Activated CD4-positive, alpha-beta memory T cell treated with anti-CD3 and anti-CD28 coated beads, Interleukin-2, amount 10 ng/mL, durations not matched to agents 7 days and 5 days (primary cell): ENCODE measurements at regions of chr10 and their contacts with region 1.

Region 1: DNA sequence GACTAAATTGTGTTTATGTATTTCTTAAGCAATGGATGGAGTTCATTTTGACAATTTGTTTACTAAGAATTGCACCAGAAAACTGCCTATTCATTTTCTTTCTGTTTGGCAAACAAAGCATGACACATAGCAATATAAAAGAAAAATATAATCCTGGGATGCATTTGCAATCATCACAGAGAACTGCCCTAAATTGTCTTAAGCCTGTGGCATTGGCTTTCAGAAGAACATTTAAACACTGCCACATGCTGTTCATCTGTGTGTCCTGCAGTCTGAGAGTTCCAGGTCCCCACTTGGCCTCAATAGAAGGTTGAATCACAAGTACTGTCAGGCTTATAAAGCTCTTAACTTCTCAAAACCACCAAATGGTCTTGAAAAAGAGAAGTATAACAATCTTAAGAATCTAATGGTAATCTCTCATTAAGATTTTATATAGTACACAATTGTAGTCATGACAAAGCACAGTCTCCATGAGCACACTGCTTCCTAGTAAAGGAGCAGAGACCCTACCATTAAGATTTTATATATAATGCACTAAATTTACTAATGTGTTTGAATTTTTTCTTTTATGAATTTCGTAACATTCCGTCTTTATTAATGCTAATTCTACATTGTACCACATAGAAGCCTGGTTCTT is 29.9 kb downstream of the RNLS start:
- DNase-seq: peak; percentile 52
- H3K4me3 Mint-ChIP-seq: no peak overlapping the region
- H3K27ac Mint-ChIP-seq: no peak overlapping the region
- H3K4me1 Mint-ChIP-seq: peaks cover 3% of the 10 kb centered on the region
- H3K27me3 Mint-ChIP-seq: no peaks in the 10 kb centered on the region

Region 2: GRCh38 chr10:87850742-87851205 is 702.5 kb before region 1 on chr10:
- CTCF ChIA-PET with region 1: interaction called, 20 read pairs
- POLR2A ChIA-PET with region 1: interaction called, 3 read pairs
- DNase-seq: peak; percentile 58
- H3K4me3 Mint-ChIP-seq: no peak overlapping the region
- H3K27ac Mint-ChIP-seq: no peak overlapping the region
- H3K4me1 Mint-ChIP-seq: peaks cover 11% of the 10 kb centered on the region
- H3K27me3 Mint-ChIP-seq: no peaks in the 10 kb centered on the region

Region 3: GRCh38 chr10:88538038-88538437 is 15.2 kb before region 1 on chr10:
- CTCF ChIA-PET with region 1: no interaction called
- POLR2A ChIA-PET with region 1: no interaction called
- DNase-seq: no peak
- H3K4me3 Mint-ChIP-seq: no peak overlapping the region
- H3K27ac Mint-ChIP-seq: no peak overlapping the region
- H3K4me1 Mint-ChIP-seq: no peaks in the 10 kb centered on the region
- H3K27me3 Mint-ChIP-seq: peaks cover 7% of the 10 kb centered on the region

Region 4: GRCh38 chr10:88616251-88616977 is 63.2 kb after region 1 on chr10:
- CTCF ChIA-PET with region 1: no interaction called
- POLR2A ChIA-PET with region 1: no interaction called
- DNase-seq: no peak
- H3K4me3 Mint-ChIP-seq: no peak overlapping the region
- H3K27ac Mint-ChIP-seq: no peak overlapping the region
- H3K4me1 Mint-ChIP-seq: no peaks in the 10 kb centered on the region
- H3K27me3 Mint-ChIP-seq: peaks cover 4% of the 10 kb centered on the region